ENCODE measurements at regions of chr17 and their contacts with region 1.

Region 1: GRCh38 chr17:65100316-65101140 is 36.6 kb upstream of the RGS9 start:
- DNase-seq: peak; percentile 88 to 97 (median 96)
- ATAC-seq: peak; percentile 95
- H3K4me3 ChIP-seq: peak overlapping the region; percentile 73
- H3K27ac ChIP-seq: no peak overlapping the region
- H3K4me1 ChIP-seq: no peaks in the 10 kb centered on the region
- H3K27me3 ChIP-seq: no peaks in the 10 kb centered on the region

Region 2: GRCh38 chr17:64975329-64976087 is 125.0 kb before region 1 on chr17:
- intact Hi-C with region 1: loop called in 2 of 4 experiments (anchors 10 kb)
- DNase-seq: peak; percentile 95 to 99 (median 98)
- ATAC-seq: peak; percentile 98
- H3K4me3 ChIP-seq: peak overlapping the region; percentile 59
- H3K27ac ChIP-seq: peak overlapping the region; percentile 95
- H3K4me1 ChIP-seq: peaks cover 4% of the 10 kb centered on the region
- H3K27me3 ChIP-seq: no peaks in the 10 kb centered on the region

Region 3: DNA sequence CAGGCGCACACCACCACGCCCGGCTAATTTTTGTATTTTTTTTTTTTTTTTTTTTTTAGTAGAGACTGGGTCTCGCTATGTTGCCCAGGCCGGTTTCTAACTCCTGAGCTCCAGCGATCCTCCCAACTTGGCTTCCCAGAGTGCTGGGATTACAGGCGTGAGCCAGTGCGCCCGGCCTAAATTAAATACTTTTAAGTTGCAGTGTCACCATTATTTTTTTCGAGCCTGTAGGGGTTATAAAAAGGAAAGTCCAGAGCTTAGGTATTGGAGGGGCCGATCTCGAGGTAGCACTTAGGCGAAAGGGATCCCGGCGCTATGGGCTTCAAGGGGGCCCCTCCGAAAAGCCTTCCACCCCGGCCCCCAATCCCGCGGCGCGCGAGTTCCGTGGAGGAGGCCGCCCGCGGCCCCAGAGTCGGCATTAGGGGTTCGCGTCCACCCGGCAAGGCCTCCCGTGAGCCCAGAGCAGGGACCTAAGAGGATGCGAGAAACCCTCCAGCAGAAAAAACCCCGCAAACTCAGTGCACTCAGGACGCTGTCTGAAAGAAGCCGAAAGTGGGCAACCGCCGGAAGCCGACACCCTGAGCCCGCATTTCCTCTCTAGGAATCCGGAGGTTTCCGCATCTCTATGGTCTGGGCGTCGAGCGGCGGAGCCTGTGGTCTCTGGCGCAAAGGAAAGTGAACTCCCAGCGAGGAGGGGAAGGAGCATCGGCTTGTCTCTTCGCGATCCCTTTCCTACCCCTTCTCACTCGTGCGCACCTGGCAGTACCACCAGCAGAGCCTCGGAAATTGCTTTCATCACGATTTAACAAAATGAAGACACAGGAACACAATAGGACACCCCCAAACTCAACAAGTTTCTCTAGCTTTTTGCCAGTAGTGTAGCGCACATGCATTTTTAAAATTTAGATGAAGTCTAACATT is 22.6 kb after region 1 on chr17:
- intact Hi-C with region 1: loop called in 1 of 4 experiments (anchors 2 kb)
- DNase-seq: peak; percentile 84 to 91 (median 91)
- ATAC-seq: peak; percentile 89 to 96
- H3K4me3 ChIP-seq: peak overlapping the region; percentile 99
- H3K27ac ChIP-seq: peak overlapping the region; percentile 95
- H3K4me1 ChIP-seq: peaks cover 1% of the 10 kb centered on the region
- H3K27me3 ChIP-seq: no peaks in the 10 kb centered on the region

Region 4: GRCh38 chr17:65359016-65359415 is 258.5 kb after region 1 on chr17:
- intact Hi-C with region 1: no loop called
- DNase-seq: no peak
- ATAC-seq: no peak
- H3K4me3 ChIP-seq: no peak overlapping the region
- H3K27ac ChIP-seq: no peak overlapping the region
- H3K4me1 ChIP-seq: no peaks in the 10 kb centered on the region
- H3K27me3 ChIP-seq: no peaks in the 10 kb centered on the region

Measured in right cardiac atrium (tissue), 5 donors.